Breast epithelium (tissue), 4 donors: ENCODE measurements at regions of chr7 and their contacts with region 1.

Region 1: GRCh38 chr7:129952653-129953560 is at the start of gene UBE2H:
- DNase-seq: peak; percentile 89 to 92
- H3K4me3 ChIP-seq: peak within 1 kb of the TSS; percentile 95 to 100 (median 98)
- H3K27ac ChIP-seq: peak within 1 kb of the TSS; percentile 99 to 100
- H3K4me1 ChIP-seq: no peaks in the 10 kb centered on the region
- H3K27me3 ChIP-seq: no peaks in the 10 kb centered on the region
- CTCF ChIP-seq: no peak
- POLR2A ChIP-seq: peak; percentile 81
- total RNA-seq, gene UBE2H: 81.8 to 124 (median 114) TPM

Region 2: GRCh38 chr7:131619336-131620305 is 1666.7 kb after region 1 on chr7:
- intact Hi-C with region 1: loop called (anchors 5 kb)
- DNase-seq: no peak
- H3K4me3 ChIP-seq: no peak overlapping the region
- H3K27ac ChIP-seq: peak overlapping the region; percentile 66 to 70
- H3K4me1 ChIP-seq: no peaks in the 10 kb centered on the region
- H3K27me3 ChIP-seq: no peaks in the 10 kb centered on the region
- CTCF ChIP-seq: no peak
- POLR2A ChIP-seq: no peak